ENCODE measurements at regions of chr12 and their contacts with region 1.

Region 1: GRCh38 chr12:53352331-53353256 is 16.4 kb upstream of the SP7 start:
- DNase-seq: peak; percentile 71 to 78
- ATAC-seq: peak; percentile 98 to 100
- H3K4me3 ChIP-seq: no peak overlapping the region
- H3K27ac ChIP-seq: no peak overlapping the region
- H3K4me1 ChIP-seq: no peaks in the 10 kb centered on the region
- H3K27me3 ChIP-seq: no peaks in the 10 kb centered on the region
- CTCF ChIP-seq: peak; percentile 89 to 94 (median 92)
- POLR2A ChIP-seq: no peak

Region 2: DNA sequence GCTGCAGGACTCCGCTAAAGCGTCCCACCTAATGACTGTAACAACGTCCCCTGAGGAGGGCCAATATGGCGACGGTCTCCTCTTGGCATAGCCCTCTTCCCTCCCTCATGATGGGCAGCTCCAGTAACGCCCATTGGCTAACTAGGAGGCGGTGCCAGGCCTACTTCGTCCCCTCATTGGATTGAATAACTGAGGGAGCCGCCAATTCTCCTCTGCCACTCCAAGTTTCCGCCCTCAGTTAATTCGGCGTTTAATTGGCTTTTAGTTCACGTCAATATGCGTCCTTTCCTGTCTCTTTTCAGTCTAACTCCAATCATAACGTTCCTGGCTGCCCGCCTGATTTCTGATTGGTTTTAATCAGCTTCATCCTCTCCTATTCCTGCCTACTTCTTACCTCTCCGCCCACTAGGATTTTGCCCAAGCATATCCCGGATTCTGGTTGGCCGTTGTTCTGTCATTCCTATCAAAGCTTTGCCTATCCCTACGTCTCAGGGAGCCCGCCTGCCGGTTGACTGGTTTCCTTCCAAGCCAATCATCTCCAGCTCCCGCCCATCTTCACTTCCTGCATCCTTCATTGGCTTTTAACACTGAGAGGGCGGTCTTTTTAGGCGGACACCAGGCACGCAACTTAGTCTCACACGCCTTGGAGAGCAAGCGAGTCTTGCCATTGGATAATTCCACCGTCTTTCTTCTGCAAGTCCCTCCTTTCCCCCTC is 27.0 kb after region 1 on chr12:
- in situ Hi-C with region 1: no loop called
- intact Hi-C with region 1: loop called (anchors 2 kb)
- DNase-seq: peak; percentile 100
- ATAC-seq: peak; percentile 84 to 89
- H3K4me3 ChIP-seq: peak overlapping the region; percentile 57 to 86 (median 66)
- H3K27ac ChIP-seq: peak overlapping the region; percentile 93 to 99 (median 96)
- H3K4me1 ChIP-seq: peaks cover 43 to 46% of the 10 kb centered on the region in 2 donors
- H3K27me3 ChIP-seq: no peaks in the 10 kb centered on the region
- CTCF ChIP-seq: no peak
- POLR2A ChIP-seq: peak; percentile 73 to 83

Region 3: GRCh38 chr12:53424626-53425514 is 72.3 kb after region 1 on chr12:
- in situ Hi-C with region 1: loop called (anchors 5 kb)
- intact Hi-C with region 1: loop called (anchors 1 kb)
- DNase-seq: no peak
- ATAC-seq: no peak
- H3K4me3 ChIP-seq: no peak overlapping the region
- H3K27ac ChIP-seq: no peak overlapping the region
- H3K4me1 ChIP-seq: peaks cover 2 to 11% of the 10 kb centered on the region in 2 donors
- H3K27me3 ChIP-seq: no peaks in the 10 kb centered on the region
- CTCF ChIP-seq: no peak
- POLR2A ChIP-seq: no peak

Region 4: DNA sequence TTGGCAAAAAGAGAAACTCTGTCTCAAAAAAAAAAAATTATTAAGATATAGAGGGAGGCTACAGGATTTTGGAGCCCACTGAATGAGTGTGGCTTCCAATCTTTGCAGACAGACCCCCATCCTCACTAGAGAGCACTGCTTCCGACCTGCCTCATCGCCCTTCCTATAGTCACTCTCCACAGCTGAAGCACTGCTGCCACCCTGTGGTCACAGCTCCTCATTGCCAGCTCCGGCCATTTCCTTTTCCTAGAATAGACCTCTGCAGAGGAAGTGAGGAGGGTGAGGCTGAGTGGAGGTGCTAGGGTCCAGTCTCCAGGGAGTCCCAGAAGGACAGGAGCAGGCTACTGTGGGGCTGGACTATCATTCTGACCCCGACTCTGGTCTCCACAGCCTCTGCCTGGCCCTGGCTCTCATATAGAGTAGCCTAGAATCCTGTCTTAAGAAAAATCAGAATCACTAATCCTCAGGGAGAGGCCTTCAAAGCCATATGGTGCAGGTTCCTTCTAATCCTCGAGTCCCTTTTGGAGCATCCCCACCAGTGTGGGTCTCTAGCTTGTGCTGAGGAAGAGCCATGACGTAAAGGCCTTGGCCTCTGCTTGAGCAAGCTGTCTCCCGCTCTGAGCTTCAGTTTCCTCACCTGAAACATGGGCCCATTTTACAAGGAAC is 156.1 kb after region 1 on chr12:
- in situ Hi-C with region 1: loop called in 2 of 4 experiments (anchors 10 kb)
- intact Hi-C with region 1: loop called (anchors 1 kb)
- DNase-seq: peak; percentile 65 to 79
- ATAC-seq: peak; percentile 91 to 92
- H3K4me3 ChIP-seq: no peak overlapping the region
- H3K27ac ChIP-seq: peak overlapping the region in 3 of 4 donors; percentile 44 to 55 (median 48)
- H3K4me1 ChIP-seq: peaks cover 0 to 10% of the 10 kb centered on the region in 2 donors
- H3K27me3 ChIP-seq: no peaks in the 10 kb centered on the region
- CTCF ChIP-seq: peak; percentile 84 to 94 (median 90)
- POLR2A ChIP-seq: no peak

Region 5: DNA sequence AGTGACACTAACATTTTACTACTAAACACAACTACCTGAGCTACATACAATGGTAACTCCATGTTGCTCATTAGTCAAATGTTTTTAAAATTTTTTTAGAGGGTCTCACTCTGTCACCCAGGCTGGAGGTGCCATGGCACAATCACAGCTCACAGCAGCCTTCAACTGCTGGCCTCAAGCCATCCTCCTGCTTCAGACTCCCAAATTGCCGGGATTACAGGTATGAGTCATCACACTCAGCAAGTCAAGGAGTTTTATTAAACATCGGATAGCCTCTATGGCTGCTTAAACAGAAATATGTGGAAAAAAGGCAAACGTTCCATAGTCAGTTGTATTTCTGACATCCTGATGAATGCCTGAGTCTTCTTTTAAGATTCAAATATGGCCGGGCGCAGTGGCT is 165.8 kb after region 1 on chr12:
- in situ Hi-C with region 1: loop called in 2 of 4 experiments (anchors 10 kb)
- intact Hi-C with region 1: no loop called
- DNase-seq: no peak
- ATAC-seq: no peak
- H3K4me3 ChIP-seq: no peak overlapping the region
- H3K27ac ChIP-seq: no peak overlapping the region
- H3K4me1 ChIP-seq: no peaks in the 10 kb centered on the region
- H3K27me3 ChIP-seq: no peaks in the 10 kb centered on the region
- CTCF ChIP-seq: no peak
- POLR2A ChIP-seq: no peak